ENCODE measurements at regions of chr19 and their contacts with region 1.

Region 1: GRCh38 chr19:39328046-39328705 is 7.5 kb upstream of the LRFN1 start:
- DNase-seq: peak; percentile 94
- H3K4me3 Mint-ChIP-seq: no peak overlapping the region
- H3K27ac Mint-ChIP-seq: no peak overlapping the region
- H3K4me1 Mint-ChIP-seq: no peaks in the 10 kb centered on the region
- H3K27me3 Mint-ChIP-seq: peaks cover 38% of the 10 kb centered on the region
- CTCF ChIP-seq: peak; percentile 99

Region 2: DNA sequence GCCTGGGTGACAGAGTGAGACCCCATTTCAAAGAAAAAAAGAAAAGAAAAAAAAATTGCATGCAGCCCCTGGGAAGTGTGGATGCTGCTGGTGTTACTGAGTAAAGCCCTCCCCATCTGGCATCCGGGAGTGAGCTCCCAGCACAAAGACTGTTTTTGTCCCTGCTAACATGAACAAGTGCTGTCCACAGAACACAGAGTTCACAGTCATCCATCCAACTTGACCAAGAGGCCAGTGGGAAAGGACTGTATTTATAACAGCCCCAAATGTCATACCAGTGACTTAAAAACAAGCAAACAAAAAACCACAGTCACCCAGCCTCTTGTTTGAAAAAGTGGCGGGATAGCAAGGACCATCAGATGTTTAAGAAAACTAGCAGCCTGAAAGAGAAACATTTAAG is 363.4 kb before region 1 on chr19:
- CTCF ChIA-PET with region 1: no interaction called
- intact Hi-C with region 1: loop called (anchors 10 kb)
- DNase-seq: no peak
- H3K4me3 Mint-ChIP-seq: no peak overlapping the region
- H3K27ac Mint-ChIP-seq: no peak overlapping the region
- H3K4me1 Mint-ChIP-seq: peaks cover 11% of the 10 kb centered on the region
- H3K27me3 Mint-ChIP-seq: no peaks in the 10 kb centered on the region
- CTCF ChIP-seq: no peak

Region 3: GRCh38 chr19:39052243-39052746 is 275.9 kb before region 1 on chr19:
- CTCF ChIA-PET with region 1: no interaction called
- intact Hi-C with region 1: loop called (anchors 5 kb)
- DNase-seq: peak; percentile 88
- H3K4me3 Mint-ChIP-seq: no peak overlapping the region
- H3K27ac Mint-ChIP-seq: no peak overlapping the region
- H3K4me1 Mint-ChIP-seq: peaks cover 20% of the 10 kb centered on the region
- H3K27me3 Mint-ChIP-seq: no peaks in the 10 kb centered on the region
- CTCF ChIP-seq: peak; percentile 97

Region 4: GRCh38 chr19:39110263-39110967 is 217.8 kb before region 1 on chr19:
- CTCF ChIA-PET with region 1: interaction called, 6 read pairs
- intact Hi-C with region 1: loop called (anchors 1 kb)
- DNase-seq: peak; percentile 91
- H3K4me3 Mint-ChIP-seq: no peak overlapping the region
- H3K27ac Mint-ChIP-seq: peak overlapping the region; percentile 46
- H3K4me1 Mint-ChIP-seq: peaks cover 33% of the 10 kb centered on the region
- H3K27me3 Mint-ChIP-seq: no peaks in the 10 kb centered on the region
- CTCF ChIP-seq: peak; percentile 95

Region 5: DNA sequence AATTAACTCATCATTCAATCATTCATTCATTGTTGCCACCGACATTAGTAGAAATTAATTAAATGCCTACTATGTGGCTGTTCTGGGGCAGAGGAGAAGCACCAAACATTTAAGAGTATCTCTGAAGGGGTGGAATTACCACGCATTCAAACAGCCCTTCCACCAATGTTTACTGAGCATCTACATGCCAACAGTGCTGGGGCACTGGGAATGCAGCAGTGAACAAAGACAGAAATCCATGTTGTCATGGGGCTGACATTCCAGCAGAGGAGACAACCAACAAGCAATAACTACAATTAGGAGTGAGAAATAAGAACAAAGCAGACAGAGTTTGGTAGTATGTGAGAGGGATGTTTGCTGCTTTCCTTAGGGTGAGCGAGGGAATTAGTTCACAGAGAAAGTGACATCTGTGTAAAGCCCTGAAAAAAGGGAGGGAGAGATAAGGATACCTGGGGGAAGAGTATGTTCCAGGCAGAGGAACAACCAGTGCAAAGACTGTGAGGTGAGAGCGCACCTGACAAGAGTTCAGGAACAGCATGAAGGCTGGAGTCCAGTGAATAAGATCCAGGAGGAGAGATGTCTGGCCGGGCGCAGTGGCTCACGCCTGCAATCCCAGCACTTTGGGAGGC is 203.9 kb before region 1 on chr19:
- CTCF ChIA-PET with region 1: interaction called, 11 read pairs
- intact Hi-C with region 1: loop called (anchors 1 kb)
- DNase-seq: no peak
- H3K4me3 Mint-ChIP-seq: peak overlapping the region; percentile 15
- H3K27ac Mint-ChIP-seq: peak overlapping the region; percentile 45
- H3K4me1 Mint-ChIP-seq: peaks cover 50% of the 10 kb centered on the region
- H3K27me3 Mint-ChIP-seq: no peaks in the 10 kb centered on the region
- CTCF ChIP-seq: no peak

Region 6: GRCh38 chr19:39212375-39212742 is 115.8 kb before region 1 on chr19:
- CTCF ChIA-PET with region 1: interaction called, 3 read pairs
- intact Hi-C with region 1: loop called (anchors 2 kb)
- DNase-seq: peak; percentile 64
- H3K4me3 Mint-ChIP-seq: no peak overlapping the region
- H3K27ac Mint-ChIP-seq: no peak overlapping the region
- H3K4me1 Mint-ChIP-seq: no peaks in the 10 kb centered on the region
- H3K27me3 Mint-ChIP-seq: peaks cover 45% of the 10 kb centered on the region
- CTCF ChIP-seq: peak; percentile 44